PC-9 (cell line): ENCODE measurements at regions of chr13 and their contacts with region 1.

Region 1: GRCh38 chr13:51729866-51730546 is 74.0 kb downstream of the DHRS12 start:
- DNase-seq: peak in 1 of 2 experiments; percentile 49
- H3K4me3 ChIP-seq: no peak overlapping the region
- H3K27ac ChIP-seq: no peak overlapping the region
- H3K4me1 ChIP-seq: peaks cover 15% of the 10 kb centered on the region
- H3K27me3 ChIP-seq: no peaks in the 10 kb centered on the region
- CTCF ChIP-seq: no peak

Region 2: DNA sequence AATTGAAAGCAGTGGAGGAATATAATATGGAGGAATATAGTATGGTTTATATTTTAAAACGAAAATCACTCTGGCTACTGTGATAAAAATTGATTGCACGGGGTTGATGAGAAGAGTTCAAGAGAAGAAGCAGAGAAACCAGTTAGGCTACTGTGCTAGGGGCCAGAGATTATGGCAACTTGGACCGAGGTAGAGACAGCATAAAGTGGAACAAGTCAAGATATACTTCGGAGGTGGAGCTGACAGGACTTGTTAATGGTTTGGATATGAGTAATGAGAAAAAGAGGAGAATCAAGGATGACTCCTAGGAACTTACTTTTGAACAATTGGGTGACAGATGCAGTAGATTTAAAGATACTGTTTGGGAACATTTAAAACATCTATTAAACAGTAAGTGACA is 152.3 kb before region 1 on chr13:
- CTCF ChIA-PET with region 1: no interaction called
- POLR2A ChIA-PET with region 1: interaction called, 13 read pairs
- intact Hi-C with region 1: no loop called
- DNase-seq: no peak
- H3K4me3 ChIP-seq: no peak overlapping the region
- H3K27ac ChIP-seq: no peak overlapping the region
- H3K4me1 ChIP-seq: no peaks in the 10 kb centered on the region
- H3K27me3 ChIP-seq: no peaks in the 10 kb centered on the region
- CTCF ChIP-seq: no peak

Region 3: GRCh38 chr13:51583875-51584730 is 145.9 kb before region 1 on chr13 and contains the start of gene WDFY2:
- CTCF ChIA-PET with region 1: no interaction called
- POLR2A ChIA-PET with region 1: no interaction called
- intact Hi-C with region 1: loop called (anchors 2 kb)
- DNase-seq: peak; percentile 98 to 99
- H3K4me3 ChIP-seq: peak within 1 kb of the TSS; percentile 91
- H3K27ac ChIP-seq: peak within 1 kb of the TSS; percentile 69
- H3K4me1 ChIP-seq: peaks cover 28% of the 10 kb centered on the region
- H3K27me3 ChIP-seq: no peaks in the 10 kb centered on the region
- CTCF ChIP-seq: 0 out of 2 replicates have a peak, but pooled peaks have one; percentile 11
- total RNA-seq, gene WDFY2: 14.1 and 14.3 TPM in 2 replicates

Region 4: GRCh38 chr13:51689663-51689996 is 40.4 kb before region 1 on chr13:
- CTCF ChIA-PET with region 1: no interaction called
- POLR2A ChIA-PET with region 1: no interaction called
- intact Hi-C with region 1: loop called (anchors 5 kb)
- DNase-seq: no peak
- H3K4me3 ChIP-seq: no peak overlapping the region
- H3K27ac ChIP-seq: no peak overlapping the region
- H3K4me1 ChIP-seq: no peaks in the 10 kb centered on the region; the same call in 1 of the 2 replicates
- H3K27me3 ChIP-seq: no peaks in the 10 kb centered on the region
- CTCF ChIP-seq: no peak

Region 5: GRCh38 chr13:51764184-51765141 is 34.5 kb after region 1 on chr13:
- CTCF ChIA-PET with region 1: no interaction called
- POLR2A ChIA-PET with region 1: no interaction called
- intact Hi-C with region 1: no loop called
- DNase-seq: no peak
- H3K4me3 ChIP-seq: no peak overlapping the region
- H3K27ac ChIP-seq: no peak overlapping the region
- H3K4me1 ChIP-seq: no peaks in the 10 kb centered on the region
- H3K27me3 ChIP-seq: no peaks in the 10 kb centered on the region
- CTCF ChIP-seq: no peak